GM12878 (cell line): ENCODE measurements at regions of chr18 and their contacts with region 1.

Region 1: GRCh38 chr18:46660955-46661749 is 4.1 kb upstream of the LOXHD1 start:
- DNase-seq: no peak
- ATAC-seq: no peak; the same call in 2 of the 3 replicates
- H3K4me3 ChIP-seq: no peak overlapping the region
- H3K27ac ChIP-seq: no peak overlapping the region
- H3K4me1 ChIP-seq: no peaks in the 10 kb centered on the region
- H3K27me3 ChIP-seq: 0 out of 4 replicates have a peak, but pooled peaks cover 0 to 3% of the 10 kb centered on the region in 2 experiments
- CTCF ChIP-seq: no peak
- EP300 ChIP-seq: no peak
- POLR2A ChIP-seq: no peak
- RAD21 ChIP-seq: no peak

Region 2: DNA sequence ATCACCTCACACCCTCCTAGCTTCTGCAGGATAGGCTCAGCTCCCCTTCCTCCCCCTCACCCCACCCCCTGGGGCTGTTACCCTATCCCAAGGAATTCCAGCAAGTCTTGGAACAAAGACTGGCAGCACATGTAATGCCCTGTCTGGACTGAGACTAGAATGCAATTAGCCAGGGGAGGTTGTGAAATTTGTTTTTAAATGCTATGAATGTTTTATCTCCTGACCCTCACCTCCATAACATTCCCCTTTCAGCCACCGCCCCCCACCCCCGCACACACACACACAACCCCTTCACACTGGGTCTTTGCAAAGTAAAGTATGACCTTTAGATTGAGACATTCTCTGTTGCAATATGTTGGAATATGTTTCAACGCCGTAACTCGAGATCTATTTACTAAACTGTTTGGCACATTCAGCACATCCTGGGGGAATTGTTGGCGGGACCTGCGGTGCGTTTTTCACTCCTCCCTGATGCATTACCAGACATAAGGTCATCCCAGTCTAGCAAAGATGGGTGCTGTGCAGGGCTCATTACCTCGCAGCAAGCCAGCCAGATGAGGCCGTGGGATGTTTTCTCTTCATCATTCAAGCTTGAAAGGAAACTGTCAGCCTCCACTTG is 1336.5 kb before region 1 on chr18:
- CTCF ChIA-PET with region 1: no interaction called
- POLR2A ChIA-PET with region 1: no interaction called
- RAD21 ChIA-PET with region 1: no interaction called
- SMC1A ChIA-PET with region 1: no interaction called
- in situ Hi-C with region 1: no loop called
- intact Hi-C with region 1: no loop called
- DNase-seq: no peak
- ATAC-seq: no peak
- H3K4me3 ChIP-seq: no peak overlapping the region
- H3K27ac ChIP-seq: no peak overlapping the region
- H3K4me1 ChIP-seq: no peaks in the 10 kb centered on the region
- H3K27me3 ChIP-seq: no peaks in the 10 kb centered on the region; a peak in 2 of 4 replicates
- CTCF ChIP-seq: no peak
- EP300 ChIP-seq: no peak
- POLR2A ChIP-seq: no peak
- RAD21 ChIP-seq: no peak

Region 3: DNA sequence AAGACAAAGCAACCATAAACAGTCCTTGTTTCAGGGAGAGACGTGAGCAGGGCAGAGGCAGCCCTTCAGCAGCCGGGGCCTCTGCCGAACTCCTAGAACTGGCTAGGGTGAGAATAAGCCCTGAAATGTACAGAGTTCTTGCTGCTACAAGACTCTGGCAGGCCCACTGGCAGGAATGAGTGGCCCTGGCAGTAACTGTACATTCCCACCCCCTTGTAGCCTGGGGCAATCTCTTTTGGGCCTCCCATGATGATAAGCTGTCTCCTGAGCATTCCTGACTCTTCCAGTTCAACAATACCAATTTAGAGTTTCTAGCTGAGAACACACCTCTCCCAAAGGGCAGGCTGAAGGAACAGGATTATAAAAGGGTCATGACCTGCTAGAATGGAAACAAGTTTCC is 502.7 kb before region 1 on chr18:
- CTCF ChIA-PET with region 1: interaction called, 10 read pairs
- POLR2A ChIA-PET with region 1: no interaction called
- RAD21 ChIA-PET with region 1: no interaction called
- SMC1A ChIA-PET with region 1: interaction called, 3 read pairs
- in situ Hi-C with region 1: no loop called
- intact Hi-C with region 1: no loop called
- DNase-seq: no peak
- ATAC-seq: no peak
- H3K4me3 ChIP-seq: no peak overlapping the region
- H3K27ac ChIP-seq: no peak overlapping the region
- H3K4me1 ChIP-seq: peaks cover 8% of the 10 kb centered on the region; the same call in 1 of the 2 replicates
- H3K27me3 ChIP-seq: no peaks in the 10 kb centered on the region
- CTCF ChIP-seq: no peak
- EP300 ChIP-seq: no peak
- POLR2A ChIP-seq: no peak
- RAD21 ChIP-seq: no peak

Region 4: GRCh38 chr18:46289931-46290330 is 371.2 kb before region 1 on chr18:
- CTCF ChIA-PET with region 1: interaction called, 60 read pairs
- POLR2A ChIA-PET with region 1: no interaction called
- RAD21 ChIA-PET with region 1: no interaction called
- SMC1A ChIA-PET with region 1: no interaction called
- in situ Hi-C with region 1: no loop called
- intact Hi-C with region 1: loop called (anchors 2 kb)
- DNase-seq: no peak
- ATAC-seq: no peak
- H3K4me3 ChIP-seq: no peak overlapping the region
- H3K27ac ChIP-seq: no peak overlapping the region
- H3K4me1 ChIP-seq: no peaks in the 10 kb centered on the region
- H3K27me3 ChIP-seq: no peaks in the 10 kb centered on the region
- CTCF ChIP-seq: no peak
- EP300 ChIP-seq: no peak
- POLR2A ChIP-seq: no peak
- RAD21 ChIP-seq: no peak

Region 5: GRCh38 chr18:46649071-46649862 is 11.9 kb before region 1 on chr18:
- CTCF ChIA-PET with region 1: interaction called, 13 read pairs
- POLR2A ChIA-PET with region 1: no interaction called
- RAD21 ChIA-PET with region 1: interaction called, 3 read pairs
- SMC1A ChIA-PET with region 1: interaction called, 3 read pairs
- in situ Hi-C with region 1: no loop called
- intact Hi-C with region 1: no loop called
- DNase-seq: no peak
- ATAC-seq: no peak
- H3K4me3 ChIP-seq: no peak overlapping the region
- H3K27ac ChIP-seq: no peak overlapping the region
- H3K4me1 ChIP-seq: no peaks in the 10 kb centered on the region
- H3K27me3 ChIP-seq: no peaks in the 10 kb centered on the region; a peak in 2 of 4 replicates
- CTCF ChIP-seq: no peak
- EP300 ChIP-seq: no peak
- POLR2A ChIP-seq: no peak
- RAD21 ChIP-seq: no peak